Right cardiac atrium (tissue), 5 donors: ENCODE measurements at regions of chr14 and their contacts with region 1.

Region 1: GRCh38 chr14:46250113-46250703 is 401.4 kb downstream of the RPL10L start:
- DNase-seq: no peak
- ATAC-seq: no peak
- H3K4me3 ChIP-seq: no peak overlapping the region
- H3K27ac ChIP-seq: no peak overlapping the region
- H3K4me1 ChIP-seq: no peaks in the 10 kb centered on the region
- H3K27me3 ChIP-seq: no peaks in the 10 kb centered on the region

Region 2: DNA sequence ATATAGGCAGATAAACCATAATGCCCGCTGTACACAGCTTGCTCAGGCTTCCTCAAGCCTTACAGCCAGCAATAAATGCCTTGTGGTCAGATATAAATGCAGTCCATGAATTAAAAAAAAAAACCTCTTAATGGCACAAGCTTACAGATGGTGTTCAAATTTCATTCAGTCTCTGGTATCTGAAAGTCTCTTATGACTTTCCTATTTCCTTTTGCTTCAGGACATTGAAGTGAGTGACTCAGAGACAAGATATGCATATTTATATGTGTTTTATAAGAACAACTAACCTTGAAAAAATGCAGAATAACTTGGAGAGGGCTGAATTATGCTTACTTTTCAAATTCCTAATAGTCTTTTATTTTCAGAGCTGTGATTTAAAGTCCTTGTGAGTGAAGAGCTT is 570.4 kb before region 1 on chr14:
- intact Hi-C with region 1: loop called in 1 of 4 experiments (anchors 10 kb)
- DNase-seq: no peak
- ATAC-seq: no peak
- H3K4me3 ChIP-seq: no peak overlapping the region
- H3K27ac ChIP-seq: no peak overlapping the region
- H3K4me1 ChIP-seq: no peaks in the 10 kb centered on the region
- H3K27me3 ChIP-seq: no peaks in the 10 kb centered on the region

Region 3: DNA sequence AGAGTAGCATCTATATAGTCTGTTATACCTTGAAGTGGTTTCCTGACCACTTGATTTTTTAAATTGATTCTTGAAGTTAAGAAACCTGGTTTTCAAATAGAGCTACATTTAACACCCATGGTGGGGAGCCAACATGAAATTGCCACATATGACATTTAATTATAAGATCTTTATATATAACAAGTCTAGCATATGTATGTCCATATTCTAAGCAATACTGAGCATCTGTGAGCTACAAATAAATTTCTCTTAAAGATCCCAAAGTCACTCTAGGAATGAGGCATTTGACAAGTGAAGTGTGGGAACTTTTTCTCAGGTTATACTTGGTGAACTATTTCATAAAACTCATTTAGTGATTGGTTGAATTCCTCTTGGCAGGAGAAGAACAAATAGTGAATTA is 268.9 kb after region 1 on chr14:
- intact Hi-C with region 1: no loop called
- DNase-seq: no peak
- ATAC-seq: no peak
- H3K4me3 ChIP-seq: no peak overlapping the region
- H3K27ac ChIP-seq: no peak overlapping the region
- H3K4me1 ChIP-seq: no peaks in the 10 kb centered on the region
- H3K27me3 ChIP-seq: no peaks in the 10 kb centered on the region

Region 4: DNA sequence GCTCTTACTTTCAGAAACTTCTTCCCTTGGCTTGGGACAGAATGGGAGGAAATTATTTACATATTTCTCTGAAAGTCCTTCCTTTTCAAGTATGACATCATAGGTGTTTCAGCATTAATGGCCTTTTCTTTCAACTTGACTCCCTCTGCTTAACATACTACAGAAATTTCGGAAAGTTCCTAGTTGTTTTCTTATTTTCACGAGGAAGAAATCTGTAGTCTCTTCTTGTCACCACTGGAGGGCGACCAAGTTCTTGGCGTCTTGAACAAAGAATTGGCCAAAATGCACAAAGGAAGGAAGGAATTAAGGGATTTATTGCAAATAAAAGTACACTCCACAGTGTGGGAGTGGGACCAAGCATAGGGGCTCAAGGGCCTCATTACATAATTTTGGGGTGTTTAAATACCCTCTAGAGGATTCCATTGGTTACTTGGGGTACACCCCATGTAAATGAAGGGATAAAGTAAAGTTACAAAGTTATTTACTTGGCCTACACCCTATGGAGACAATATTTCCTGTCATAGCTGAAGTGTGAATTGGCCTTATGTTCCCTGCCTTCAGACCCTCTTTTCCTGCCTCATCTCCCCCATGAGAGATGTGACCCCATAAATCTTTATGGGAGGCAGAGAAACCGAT is 330.9 kb after region 1 on chr14:
- intact Hi-C with region 1: no loop called
- DNase-seq: no peak
- ATAC-seq: no peak
- H3K4me3 ChIP-seq: no peak overlapping the region
- H3K27ac ChIP-seq: no peak overlapping the region
- H3K4me1 ChIP-seq: no peaks in the 10 kb centered on the region
- H3K27me3 ChIP-seq: no peaks in the 10 kb centered on the region